Endothelial cell of umbilical vein (primary cell): ENCODE measurements at regions of chr20 and their contacts with region 1.

Region 1: DNA sequence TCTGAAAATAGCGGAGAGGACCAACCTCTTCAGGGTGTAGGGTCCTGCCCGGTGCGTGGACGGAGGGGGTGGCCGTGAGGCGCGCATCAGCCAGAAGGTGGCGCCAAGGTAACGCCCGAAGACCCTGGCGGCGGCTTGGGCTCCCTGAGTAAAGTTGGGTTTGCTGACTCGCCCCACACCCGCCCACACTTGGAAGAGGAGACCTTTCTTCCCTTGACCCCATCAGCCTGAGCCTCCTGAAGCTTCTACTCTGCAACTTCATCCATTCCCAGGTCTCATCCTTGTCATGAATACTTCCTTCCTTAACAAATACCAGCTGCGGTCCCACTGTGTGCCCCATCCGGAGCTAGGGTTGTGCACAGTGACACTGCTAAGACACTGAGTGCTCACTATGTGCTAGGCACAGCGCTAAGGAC is 14.6 kb downstream of the CD40 start:
- DNase-seq: peak; percentile 77
- H3K4me3 ChIP-seq: no peak overlapping the region
- H3K27ac ChIP-seq: no peak overlapping the region
- H3K4me1 ChIP-seq: peaks cover 3% of the 10 kb centered on the region
- H3K27me3 ChIP-seq: peaks cover 8 to 9% of the 10 kb centered on the region in 2 experiments
- CTCF ChIP-seq: peak; percentile 81 to 95
- POLR2A ChIP-seq: no peak

Region 2: GRCh38 chr20:46078954-46079353 is 53.8 kb before region 1 on chr20:
- CTCF ChIA-PET with region 1: no interaction called
- POLR2A ChIA-PET with region 1: no interaction called
- dilution Hi-C with region 1: no loop called
- intact Hi-C with region 1: no loop called
- DNase-seq: no peak
- H3K4me3 ChIP-seq: no peak overlapping the region
- H3K27ac ChIP-seq: no peak overlapping the region
- H3K4me1 ChIP-seq: no peaks in the 10 kb centered on the region
- H3K27me3 ChIP-seq: no peaks in the 10 kb centered on the region
- CTCF ChIP-seq: no peak
- POLR2A ChIP-seq: no peak

Region 3: GRCh38 chr20:46174469-46175128 is 41.9 kb after region 1 on chr20:
- CTCF ChIA-PET with region 1: interaction called, 77 read pairs
- POLR2A ChIA-PET with region 1: no interaction called
- dilution Hi-C with region 1: no loop called
- intact Hi-C with region 1: loop called (anchors 1 kb)
- DNase-seq: peak; percentile 44
- H3K4me3 ChIP-seq: no peak overlapping the region
- H3K27ac ChIP-seq: no peak overlapping the region
- H3K4me1 ChIP-seq: no peaks in the 10 kb centered on the region
- H3K27me3 ChIP-seq: peaks cover 18 to 33% of the 10 kb centered on the region in 2 experiments
- CTCF ChIP-seq: peak; percentile 50 to 85
- POLR2A ChIP-seq: no peak

Region 4: DNA sequence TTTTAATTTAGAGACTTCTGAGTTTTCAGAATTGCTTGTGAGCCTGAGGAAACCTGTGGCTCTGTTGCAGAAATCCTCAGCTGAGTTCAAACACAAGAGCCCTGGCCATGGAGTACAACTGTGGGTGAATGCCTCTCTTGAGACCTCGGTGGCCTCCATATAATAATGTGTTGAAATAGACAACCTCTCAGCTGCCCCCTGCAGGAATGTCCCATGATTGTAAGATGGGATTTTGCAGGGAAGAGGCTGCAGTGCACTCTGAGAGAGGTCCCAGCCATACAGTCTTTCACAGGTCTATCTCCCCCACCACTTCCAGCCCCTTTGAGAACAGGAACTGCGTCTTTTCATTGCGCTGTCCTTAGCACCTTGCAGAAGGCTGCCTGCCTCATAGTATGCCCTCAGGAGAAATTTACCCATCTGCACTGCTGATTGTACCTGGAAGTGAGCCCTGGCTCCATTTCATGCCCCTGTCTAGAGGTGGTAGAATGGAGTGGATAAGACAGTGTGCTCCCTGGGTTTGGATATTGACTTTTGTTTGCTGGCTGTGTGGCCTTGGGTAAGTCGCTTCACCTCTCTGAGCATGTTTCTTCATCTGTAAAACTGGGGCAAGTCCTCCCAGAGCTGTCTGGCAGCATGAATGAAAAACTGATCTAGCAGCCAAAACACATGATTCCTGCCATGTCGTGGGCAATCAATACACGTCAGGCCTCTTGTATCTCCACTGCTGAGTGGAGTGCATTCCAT is 192.4 kb after region 1 on chr20:
- CTCF ChIA-PET with region 1: interaction called, 12 read pairs
- POLR2A ChIA-PET with region 1: no interaction called
- dilution Hi-C with region 1: no loop called
- intact Hi-C with region 1: loop called (anchors 1 kb)
- DNase-seq: peak; percentile 42
- H3K4me3 ChIP-seq: no peak overlapping the region
- H3K27ac ChIP-seq: no peak overlapping the region
- H3K4me1 ChIP-seq: no peaks in the 10 kb centered on the region
- H3K27me3 ChIP-seq: peaks cover 0 to 8% of the 10 kb centered on the region in 2 experiments
- CTCF ChIP-seq: peak; percentile 36 to 50
- POLR2A ChIP-seq: no peak

Region 5: DNA sequence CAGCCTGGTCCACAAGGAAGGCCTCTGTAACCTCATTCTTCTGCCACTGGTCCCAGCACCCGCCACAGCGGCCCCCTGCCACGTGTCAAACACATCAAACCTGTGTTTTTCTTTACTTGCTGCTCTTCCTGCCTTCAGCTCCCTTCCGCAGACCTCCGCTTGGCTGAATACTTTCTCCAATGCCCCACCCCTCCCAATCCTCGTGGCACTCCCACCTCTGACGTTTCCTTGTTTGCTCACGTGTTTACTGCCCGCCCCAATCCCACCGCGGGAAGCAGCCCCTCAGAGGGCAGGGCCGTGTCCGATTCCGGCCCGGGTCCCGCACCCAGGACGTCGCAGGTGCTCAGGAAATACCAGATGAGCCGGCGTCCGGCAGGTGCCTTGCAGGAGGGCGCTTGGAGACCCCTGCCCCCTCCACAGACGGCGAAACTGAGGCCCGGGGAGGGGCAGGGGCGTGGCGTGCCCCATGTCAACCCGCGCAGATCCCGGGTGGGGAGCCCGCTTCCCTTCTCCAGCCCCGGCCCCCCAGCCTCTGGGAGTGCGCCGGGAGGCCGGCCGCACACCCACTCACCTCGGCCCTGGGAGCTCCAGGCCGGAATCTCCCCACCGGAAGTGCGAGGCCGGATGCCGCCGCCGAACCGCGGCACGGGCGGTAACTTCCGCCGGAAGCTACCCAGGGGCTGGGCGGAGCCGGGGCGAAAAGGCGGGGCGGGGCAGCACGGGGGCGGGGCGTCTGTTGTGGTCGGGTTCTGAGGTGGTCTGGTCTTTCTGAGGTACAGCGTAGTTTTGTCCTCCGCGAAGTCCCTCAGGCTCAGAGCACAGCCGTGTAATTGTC is 231.3 kb after region 1 on chr20:
- CTCF ChIA-PET with region 1: interaction called, 5 read pairs
- POLR2A ChIA-PET with region 1: no interaction called
- dilution Hi-C with region 1: no loop called
- intact Hi-C with region 1: loop called (anchors 5 kb)
- DNase-seq: peak; percentile 88
- H3K4me3 ChIP-seq: peak overlapping the region; percentile 49 to 90 (median 67)
- H3K27ac ChIP-seq: peak overlapping the region; percentile 94
- H3K4me1 ChIP-seq: peaks cover 8% of the 10 kb centered on the region
- H3K27me3 ChIP-seq: no peaks in the 10 kb centered on the region
- CTCF ChIP-seq: no peak
- POLR2A ChIP-seq: peak; percentile 68

Region 6: DNA sequence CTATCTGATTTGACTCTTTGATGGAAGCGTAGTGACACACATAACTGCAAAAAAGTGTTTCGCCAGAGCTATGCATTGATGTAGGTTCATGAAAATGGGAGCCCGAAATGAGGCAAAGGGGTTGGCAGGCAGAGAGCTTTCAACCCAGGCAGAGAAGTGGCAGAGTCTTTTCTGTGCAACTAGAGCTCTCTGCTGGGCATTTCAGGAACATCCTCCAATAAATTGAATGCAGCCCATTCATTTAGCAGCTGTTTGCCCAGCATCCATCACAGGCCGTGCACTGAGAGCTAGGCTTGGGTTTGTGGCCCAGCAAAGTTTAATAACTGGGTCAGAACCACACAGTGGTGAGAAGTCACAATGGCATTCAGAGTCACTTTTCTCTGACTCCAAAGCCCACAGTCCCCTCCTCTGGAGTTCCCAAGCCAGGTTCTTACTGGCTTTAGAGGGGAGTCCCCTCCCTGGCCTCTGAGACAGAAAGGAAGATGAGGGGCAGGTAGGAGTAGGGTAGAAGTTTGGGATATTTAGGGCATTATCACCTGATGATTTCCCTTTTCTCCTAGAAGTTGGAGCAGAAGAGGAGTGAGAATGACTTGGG is 305.5 kb after region 1 on chr20:
- CTCF ChIA-PET with region 1: interaction called, 23 read pairs
- POLR2A ChIA-PET with region 1: no interaction called
- dilution Hi-C with region 1: no loop called
- intact Hi-C with region 1: loop called (anchors 1 kb)
- DNase-seq: peak; percentile 15
- H3K4me3 ChIP-seq: no peak overlapping the region
- H3K27ac ChIP-seq: no peak overlapping the region
- H3K4me1 ChIP-seq: no peaks in the 10 kb centered on the region
- H3K27me3 ChIP-seq: peaks cover 0 to 2% of the 10 kb centered on the region in 2 experiments
- CTCF ChIP-seq: peak in 1 of 2 donors; percentile 30
- POLR2A ChIP-seq: no peak

Region 7: DNA sequence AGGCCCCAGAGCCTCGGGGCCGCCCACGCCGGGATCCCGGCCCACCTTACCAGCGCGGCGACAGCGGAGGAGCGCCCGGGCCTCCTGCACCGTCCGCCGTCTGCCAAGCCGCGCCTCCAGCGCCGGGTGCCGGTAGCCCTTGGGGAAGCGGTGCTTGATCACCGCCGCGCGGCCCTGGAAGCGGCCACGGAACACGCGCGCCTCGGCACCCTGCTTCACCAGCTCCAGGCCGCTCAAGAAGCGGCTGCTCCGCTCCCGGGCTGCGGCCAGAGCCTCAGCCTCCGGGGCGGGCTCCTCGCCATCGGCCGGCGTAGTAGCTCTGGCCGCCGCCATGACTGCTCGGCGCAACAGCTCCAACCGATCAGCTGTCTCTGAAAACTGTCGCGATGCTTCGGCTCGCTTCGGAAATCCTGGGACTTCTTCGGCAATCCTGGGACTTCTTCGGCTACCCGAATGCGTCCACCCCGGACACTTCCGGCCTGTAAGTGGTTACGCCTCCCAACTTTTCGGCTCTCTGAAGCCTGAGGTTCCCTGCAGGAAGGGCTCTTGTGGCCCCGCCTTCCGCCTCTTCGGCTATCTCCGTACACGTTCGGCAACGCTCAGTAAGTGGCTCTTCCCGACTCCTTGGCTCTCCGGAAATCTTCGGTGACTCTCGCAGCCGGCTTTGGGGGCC is 556.5 kb after region 1 on chr20 and contains the start of gene TP53RK:
- CTCF ChIA-PET with region 1: no interaction called
- POLR2A ChIA-PET with region 1: no interaction called
- dilution Hi-C with region 1: no loop called
- intact Hi-C with region 1: loop called (anchors 2 kb)
- DNase-seq: peak; percentile 100
- H3K4me3 ChIP-seq: peak within 1 kb of the TSS; percentile 62 to 91 (median 90)
- H3K27ac ChIP-seq: peak within 1 kb of the TSS; percentile 55
- H3K4me1 ChIP-seq: peaks cover 16% of the 10 kb centered on the region
- H3K27me3 ChIP-seq: no peaks in the 10 kb centered on the region
- CTCF ChIP-seq: peak; percentile 7 to 33
- POLR2A ChIP-seq: peak; percentile 92
- total RNA-seq, gene TP53RK: 11.8 and 13.1 TPM in 2 replicates